ENCODE measurements at regions of chr17 and their contacts with region 1.

Region 1: DNA sequence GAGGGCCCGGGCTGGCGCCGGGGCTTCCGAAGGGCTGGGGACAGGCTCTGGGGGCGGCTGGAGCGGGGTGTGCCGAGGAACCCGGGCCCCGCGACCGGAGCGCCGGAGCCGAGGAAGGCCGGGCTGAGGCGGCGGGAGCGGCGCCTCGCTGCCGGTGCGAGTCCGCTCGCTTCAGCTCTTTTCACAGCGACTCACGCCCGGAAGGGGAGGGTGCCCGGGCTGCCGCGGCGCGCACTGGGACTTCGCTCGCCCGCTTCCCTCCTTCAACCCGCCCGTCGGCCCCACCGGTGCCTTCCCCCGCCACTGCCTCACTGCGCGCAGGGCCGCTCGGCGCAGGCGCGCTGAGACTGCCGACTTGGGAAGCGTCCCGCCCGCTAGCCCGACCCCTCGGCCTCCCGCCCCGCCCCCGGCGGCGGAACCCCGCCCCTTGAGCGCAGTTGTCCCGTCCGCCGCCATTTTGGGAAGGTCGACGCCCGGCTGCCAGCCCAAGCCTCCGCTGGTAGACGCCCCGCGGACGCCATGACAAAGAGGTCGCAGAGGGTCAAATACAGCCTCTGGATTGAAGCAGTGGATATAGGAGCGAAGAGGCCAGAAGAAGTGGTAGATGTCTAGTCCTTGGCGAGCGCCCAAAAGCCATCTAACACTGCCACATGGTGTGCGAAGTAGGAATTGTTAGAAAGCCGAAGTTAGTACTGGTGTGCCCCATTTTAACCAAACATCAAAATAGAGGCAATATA is at the start of gene UBE2G1:
- DNase-seq: peak; percentile 87 to 99
- H3K4me3 ChIP-seq: peak within 1 kb of the TSS; percentile 86 to 93
- H3K27ac ChIP-seq: peak within 1 kb of the TSS; percentile 93 to 98
- H3K4me1 ChIP-seq: peaks cover 6 to 18% of the 10 kb centered on the region in 2 donors
- H3K27me3 ChIP-seq: no peaks in the 10 kb centered on the region
- CTCF ChIP-seq: peak; percentile 8 to 36 (median 21)
- total RNA-seq, gene UBE2G1: 27.9 TPM

Region 2: DNA sequence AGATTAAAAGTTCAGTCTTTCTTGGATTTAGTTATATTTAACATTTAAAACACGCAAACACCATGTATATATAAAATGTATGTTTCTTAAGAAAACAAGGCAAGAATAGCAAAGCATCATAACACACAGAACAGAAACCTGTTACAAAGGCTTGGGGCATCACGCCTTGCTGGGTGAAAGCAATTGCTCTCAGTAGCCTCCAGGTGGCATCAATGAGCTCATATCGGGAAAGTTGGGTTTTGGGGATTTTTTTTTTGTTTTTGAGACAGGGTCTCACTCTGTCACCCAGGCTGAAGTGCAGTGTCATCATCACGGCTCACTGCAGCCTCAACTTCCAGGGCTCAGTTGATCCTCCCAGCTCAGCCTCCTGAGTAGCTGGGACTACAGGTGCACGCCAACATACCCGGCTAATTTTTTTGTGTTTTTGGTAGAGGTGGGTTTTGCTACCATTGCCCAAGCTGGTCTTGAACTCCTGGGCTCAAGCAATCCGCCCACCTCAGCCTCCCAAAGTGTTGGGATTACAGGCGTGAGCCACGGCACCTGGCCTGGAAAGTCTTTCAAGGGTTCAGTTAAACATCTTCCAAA is 166.6 kb before region 1 on chr17:
- intact Hi-C with region 1: loop called (anchors 5 kb)
- DNase-seq: peak in 1 of 2 donors; percentile 59
- H3K4me3 ChIP-seq: no peak overlapping the region
- H3K27ac ChIP-seq: no peak overlapping the region
- H3K4me1 ChIP-seq: peaks cover 0 to 11% of the 10 kb centered on the region in 2 donors
- H3K27me3 ChIP-seq: no peaks in the 10 kb centered on the region
- CTCF ChIP-seq: peak; percentile 43 to 74 (median 70)

Region 3: DNA sequence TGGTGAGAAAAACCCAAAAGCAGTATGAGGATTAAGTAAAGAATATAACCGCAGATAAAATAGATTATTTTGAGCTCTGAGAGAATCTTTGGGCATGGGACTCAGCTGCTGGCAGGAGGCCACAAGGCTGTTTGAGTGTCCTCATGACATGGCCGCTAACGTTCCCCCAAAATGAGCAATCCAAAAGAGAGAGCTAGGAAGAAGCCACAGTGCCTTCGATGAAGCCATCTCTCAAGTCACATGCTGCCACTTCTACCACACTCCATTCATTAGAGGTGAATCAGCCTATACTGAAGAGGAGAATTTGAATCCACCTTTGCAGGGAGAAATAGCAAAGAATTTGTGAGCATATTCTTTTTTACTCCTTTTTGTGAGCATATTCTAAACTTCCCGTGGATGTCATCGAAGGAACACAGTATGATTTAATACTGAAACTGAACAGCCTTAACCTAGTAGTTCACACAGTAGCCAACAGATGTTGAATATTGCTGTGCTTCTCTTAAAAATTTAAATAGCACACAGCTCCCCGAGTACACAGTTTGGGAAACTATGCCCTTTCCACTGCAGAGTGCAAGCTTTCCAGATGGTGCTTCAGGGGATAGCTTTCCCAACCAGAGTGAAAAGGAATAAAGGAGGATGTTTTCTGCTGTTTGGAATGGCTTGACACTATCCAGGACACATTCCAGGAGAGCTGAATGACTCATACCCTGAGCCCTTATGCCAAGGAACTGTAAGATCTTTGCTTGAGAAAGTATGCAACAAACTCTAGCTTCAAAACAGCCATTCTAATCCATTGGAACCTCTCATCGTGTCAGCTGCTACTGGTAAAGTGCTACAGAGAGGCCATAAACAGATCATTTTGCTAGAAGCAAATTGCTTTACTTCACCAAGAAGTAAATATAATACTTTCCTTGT is 136.6 kb before region 1 on chr17:
- intact Hi-C with region 1: loop called (anchors 5 kb)
- DNase-seq: peak in 1 of 2 donors; percentile 80
- H3K4me3 ChIP-seq: peak overlapping the region in 1 of 2 donors; percentile 46
- H3K27ac ChIP-seq: peak overlapping the region; percentile 82 to 84
- H3K4me1 ChIP-seq: peaks cover 10 to 59% of the 10 kb centered on the region in 2 donors
- H3K27me3 ChIP-seq: no peaks in the 10 kb centered on the region
- CTCF ChIP-seq: no peak

Region 4: GRCh38 chr17:4263282-4264215 is 102.9 kb before region 1 on chr17 and contains the start of gene ANKFY1:
- intact Hi-C with region 1: loop called (anchors 5 kb)
- DNase-seq: peak; percentile 83 to 98
- H3K4me3 ChIP-seq: peak within 1 kb of the TSS; percentile 87 to 100
- H3K27ac ChIP-seq: peak within 1 kb of the TSS; percentile 77 to 83
- H3K4me1 ChIP-seq: peaks cover 11 to 25% of the 10 kb centered on the region in 2 donors
- H3K27me3 ChIP-seq: no peaks in the 10 kb centered on the region
- CTCF ChIP-seq: peak in 2 of 3 experiments; percentile 17 to 40
- total RNA-seq, gene ANKFY1: 16.2 TPM

Region 5: DNA sequence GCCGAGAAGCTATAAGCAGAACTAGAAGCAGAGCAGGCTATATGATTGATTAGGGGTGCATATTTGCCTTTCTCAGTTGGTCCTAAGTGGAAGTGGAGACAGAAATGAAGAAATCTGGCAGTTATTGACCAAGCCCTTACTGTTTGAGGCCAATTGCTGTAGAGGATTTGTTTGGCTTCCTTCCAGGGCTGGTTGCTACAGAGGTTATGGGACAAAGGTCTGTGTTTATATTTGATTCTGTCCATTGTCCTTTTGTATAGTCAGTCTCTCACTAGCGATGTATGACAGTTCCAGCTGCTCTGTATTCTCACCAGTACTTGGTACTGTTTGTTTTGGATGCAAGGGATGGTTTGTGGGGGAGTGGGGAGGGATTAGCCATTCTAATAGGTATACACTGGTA is 282.2 kb after region 1 on chr17:
- intact Hi-C with region 1: no loop called
- DNase-seq: no peak
- H3K4me3 ChIP-seq: no peak overlapping the region
- H3K27ac ChIP-seq: no peak overlapping the region
- H3K4me1 ChIP-seq: no peaks in the 10 kb centered on the region
- H3K27me3 ChIP-seq: no peaks in the 10 kb centered on the region
- CTCF ChIP-seq: no peak

Measured in ascending aorta (tissue), 2 donors.